ENCODE measurements at regions of chr17 and their contacts with region 1.

Region 1: GRCh38 chr17:78128551-78129350 is at the start of gene TMC6:
- DNase-seq: peak; percentile 56
- H3K4me3 Mint-ChIP-seq: peak within 1 kb of the TSS; percentile 98
- H3K27ac Mint-ChIP-seq: peak within 1 kb of the TSS; percentile 99
- H3K4me1 Mint-ChIP-seq: peaks cover 44% of the 10 kb centered on the region
- H3K27me3 Mint-ChIP-seq: no peaks in the 10 kb centered on the region
- total RNA-seq, gene TMC6: 265 and 268 TPM in 2 replicates

Region 2: GRCh38 chr17:78168242-78168902 is 39.6 kb after region 1 on chr17 and contains the start of gene SYNGR2:
- intact Hi-C with region 1: loop called (anchors 1 kb)
- DNase-seq: peak; percentile 88
- H3K4me3 Mint-ChIP-seq: peak within 1 kb of the TSS; percentile 77
- H3K27ac Mint-ChIP-seq: peak within 1 kb of the TSS; percentile 65
- H3K4me1 Mint-ChIP-seq: peaks cover 28% of the 10 kb centered on the region
- H3K27me3 Mint-ChIP-seq: peaks cover 2% of the 10 kb centered on the region
- total RNA-seq, gene SYNGR2: 131 and 133 TPM in 2 replicates

Region 3: DNA sequence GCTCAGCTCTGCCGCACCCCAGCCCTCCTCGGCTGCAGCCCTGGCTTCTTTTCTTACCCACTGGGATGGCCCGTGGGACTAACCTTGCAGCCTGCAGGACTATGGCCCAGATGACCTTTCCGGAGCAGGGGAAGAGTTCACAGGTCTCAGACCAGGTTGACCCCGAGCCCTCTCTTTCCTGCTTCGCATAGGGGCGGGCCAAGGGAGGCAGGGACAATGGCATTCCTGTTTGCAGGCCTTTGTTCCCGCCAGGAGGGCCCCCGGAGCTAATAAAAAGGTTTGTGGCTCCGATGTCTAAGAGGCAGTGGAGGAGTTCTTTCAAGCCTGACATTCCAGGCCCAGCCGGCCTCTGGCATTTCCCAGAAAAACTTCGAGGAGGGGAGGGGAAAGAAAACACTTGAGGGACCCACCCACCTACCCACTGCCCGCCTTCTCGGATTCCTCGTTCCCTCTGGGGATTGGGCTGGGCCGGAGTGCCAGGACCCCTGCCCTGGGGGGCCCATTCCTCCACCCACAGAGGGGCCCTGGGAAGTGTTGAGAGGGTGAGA is 236.9 kb after region 1 on chr17:
- intact Hi-C with region 1: no loop called
- DNase-seq: no peak
- H3K4me3 Mint-ChIP-seq: no peak overlapping the region
- H3K27ac Mint-ChIP-seq: no peak overlapping the region
- H3K4me1 Mint-ChIP-seq: peaks cover 29% of the 10 kb centered on the region
- H3K27me3 Mint-ChIP-seq: no peaks in the 10 kb centered on the region

Region 4: DNA sequence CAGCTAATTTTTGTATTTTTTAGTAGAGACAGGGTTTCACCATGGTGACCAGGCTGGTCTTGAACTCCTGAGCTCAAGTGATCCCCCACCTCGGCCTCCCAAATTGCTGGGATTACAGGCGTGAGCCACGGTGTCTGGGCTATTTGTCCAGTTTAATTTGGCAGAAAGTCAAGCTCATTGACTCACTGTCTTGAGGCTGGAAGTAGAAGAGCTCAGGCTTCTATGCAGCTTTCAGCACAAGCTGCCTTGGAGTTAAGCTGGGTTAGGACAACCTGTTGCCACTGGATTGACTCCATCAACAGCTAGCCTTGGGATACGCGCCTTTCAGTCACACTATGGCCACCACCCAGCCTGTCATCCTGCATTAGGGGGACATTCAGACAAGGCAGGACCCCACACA is 524.6 kb after region 1 on chr17:
- intact Hi-C with region 1: no loop called
- DNase-seq: no peak
- H3K4me3 Mint-ChIP-seq: no peak overlapping the region
- H3K27ac Mint-ChIP-seq: no peak overlapping the region
- H3K4me1 Mint-ChIP-seq: no peaks in the 10 kb centered on the region
- H3K27me3 Mint-ChIP-seq: peaks cover 4% of the 10 kb centered on the region

Measured in activated T-helper 1 cell treated with anti-CD3 and anti-CD28 coated beads, Interleukin-12 subunit alpha, Interleukin-12 subunit beta, Interleukin-2, Interleukin-4 antibody, amounts not matched to agents 30 ng/mL and 10 ng/mL and 1 ng/mL, durations not matched to agents 14 hours and 24 hours and 36 hours (primary cell).